ENCODE measurements at regions of chr1 and their contacts with region 1.

Region 1: DNA sequence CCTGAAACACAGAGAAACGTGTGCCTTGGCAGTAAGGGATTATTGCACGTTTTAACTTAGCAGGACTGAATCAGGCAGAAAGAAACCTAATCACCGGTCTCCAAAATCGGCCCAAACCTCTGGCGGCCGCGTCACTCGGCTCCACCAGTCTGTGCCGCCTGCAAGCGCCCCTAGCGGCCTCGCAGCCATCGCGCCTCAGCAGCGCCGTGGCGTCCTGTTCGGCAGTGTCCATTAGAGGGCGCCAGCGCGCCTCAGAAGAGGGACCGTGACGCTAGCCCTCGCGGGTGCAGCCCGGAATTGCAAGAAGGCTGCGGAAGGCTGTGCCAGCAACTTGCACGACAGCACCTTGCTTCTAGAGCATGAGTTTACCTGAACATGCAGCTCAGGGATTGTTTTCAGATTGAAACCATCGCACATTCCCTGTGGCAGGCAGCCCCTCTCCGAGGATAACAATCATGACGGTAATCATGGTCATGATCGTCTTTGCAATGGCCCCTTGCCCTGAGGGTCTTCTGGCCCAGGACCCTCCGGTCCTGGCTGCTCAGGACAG is 164.4 kb downstream of the TRIM33 start:
- DNase-seq: peak; percentile 98
- H3K4me3 Mint-ChIP-seq: peak overlapping the region; percentile 84
- H3K27ac Mint-ChIP-seq: peak overlapping the region; percentile 80
- H3K4me1 Mint-ChIP-seq: peaks cover 18% of the 10 kb centered on the region
- H3K27me3 Mint-ChIP-seq: no peaks in the 10 kb centered on the region

Region 2: DNA sequence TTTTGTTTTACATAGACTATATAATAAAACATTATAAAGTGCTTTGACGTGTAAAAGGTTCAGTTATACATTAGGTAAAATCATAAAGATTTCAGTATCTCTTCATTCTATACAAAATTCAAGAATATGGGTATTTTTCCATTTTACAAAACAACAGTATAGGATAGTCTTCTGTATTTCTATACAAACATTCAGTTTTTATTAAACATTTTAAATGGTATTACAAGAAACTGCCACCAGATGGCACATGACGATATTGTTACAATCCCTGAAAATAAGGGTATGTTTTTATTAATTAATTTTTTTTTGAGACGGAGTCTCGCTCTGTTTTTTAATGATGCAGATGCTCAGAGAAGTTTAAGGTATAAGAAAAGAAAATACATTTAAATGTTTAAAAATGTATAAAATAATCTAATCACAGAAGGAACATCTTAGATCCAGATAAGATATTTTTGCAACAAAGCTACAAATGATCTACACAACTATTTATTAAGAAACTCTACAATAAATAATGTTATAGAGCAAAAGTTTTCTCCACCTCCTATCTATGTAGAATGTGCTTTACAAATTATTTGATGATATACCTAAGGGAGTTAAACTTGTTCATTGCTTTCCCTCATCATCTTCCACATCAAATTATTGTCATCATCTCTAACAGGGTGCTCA is 510.8 kb before region 1 on chr1:
- CTCF ChIA-PET with region 1: no interaction called
- intact Hi-C with region 1: no loop called
- DNase-seq: peak; percentile 35
- H3K4me3 Mint-ChIP-seq: no peak overlapping the region
- H3K27ac Mint-ChIP-seq: no peak overlapping the region
- H3K4me1 Mint-ChIP-seq: peaks cover 3% of the 10 kb centered on the region
- H3K27me3 Mint-ChIP-seq: no peaks in the 10 kb centered on the region

Region 3: DNA sequence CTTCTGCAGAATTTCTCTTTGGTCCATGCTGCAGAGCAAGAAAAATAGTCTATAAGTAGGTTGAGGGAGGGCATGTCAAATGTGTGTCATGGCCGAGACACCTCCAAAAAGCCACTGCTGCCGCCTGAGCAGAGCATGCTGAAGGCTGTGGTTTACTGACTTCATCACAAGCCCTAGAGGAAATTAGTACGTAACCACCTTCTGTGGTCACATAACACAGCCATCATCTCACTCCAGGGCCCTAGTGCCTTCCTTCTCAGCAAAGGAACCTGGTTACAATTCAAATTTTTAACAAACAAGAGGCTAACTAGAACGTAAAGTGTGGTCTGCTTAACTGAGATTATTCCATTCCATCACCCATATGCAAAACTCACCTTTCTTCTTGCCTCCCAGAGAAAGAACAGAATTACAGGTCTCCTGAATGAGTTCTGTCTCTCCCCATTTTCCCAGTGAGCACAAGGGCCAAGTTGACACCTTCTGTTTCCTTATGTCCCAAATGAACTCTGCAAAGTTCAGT is 474.9 kb before region 1 on chr1 and contains the start of gene PTPN22:
- CTCF ChIA-PET with region 1: no interaction called
- intact Hi-C with region 1: loop called (anchors 10 kb)
- DNase-seq: peak; percentile 90
- H3K4me3 Mint-ChIP-seq: peak within 1 kb of the TSS; percentile 85
- H3K27ac Mint-ChIP-seq: peak within 1 kb of the TSS; percentile 98
- H3K4me1 Mint-ChIP-seq: peaks cover 64% of the 10 kb centered on the region
- H3K27me3 Mint-ChIP-seq: no peaks in the 10 kb centered on the region
- total RNA-seq, gene PTPN22: 43.9 to 50.9 TPM

Region 4: DNA sequence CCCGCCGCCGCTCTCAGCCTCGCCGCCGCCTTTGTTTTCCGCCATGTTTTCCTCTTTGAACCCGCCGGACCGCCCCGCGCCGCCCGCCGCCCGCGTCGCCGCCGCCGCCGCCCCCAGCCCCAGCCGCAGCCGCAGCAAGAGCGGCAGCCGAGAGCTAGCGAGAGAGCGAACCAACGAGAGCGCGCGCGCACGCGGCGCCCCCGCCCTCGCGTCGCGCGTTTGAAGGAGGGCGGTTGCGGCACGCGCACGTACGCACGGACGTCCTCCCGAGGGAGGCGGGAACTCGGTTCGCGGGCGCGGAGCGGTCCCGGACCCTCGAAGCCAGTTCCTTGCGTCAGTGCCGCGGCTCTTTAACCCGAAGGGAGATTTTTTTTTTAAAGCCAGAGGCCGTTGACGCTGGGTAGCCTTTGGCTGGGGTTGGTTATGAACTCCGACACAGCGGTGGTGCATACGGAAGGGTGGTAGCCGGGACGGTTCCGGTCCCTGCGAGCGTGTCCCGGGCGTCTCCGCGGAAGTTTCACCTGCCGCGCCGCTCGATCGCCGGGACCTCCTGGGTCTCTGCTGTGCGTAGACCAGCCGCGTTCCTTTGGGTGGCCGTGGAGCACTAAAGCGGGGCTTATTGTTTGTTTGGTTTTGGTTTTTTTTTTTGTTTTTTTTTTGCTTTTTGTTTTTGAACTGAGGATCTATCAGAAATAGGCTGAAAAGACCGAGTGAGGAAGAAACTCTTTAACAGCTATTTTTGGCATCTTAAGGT is 164.7 kb after region 1 on chr1 and contains the start of gene TRIM33:
- CTCF ChIA-PET with region 1: interaction called, 3 read pairs
- intact Hi-C with region 1: loop called (anchors 1 kb)
- DNase-seq: peak; percentile 92
- H3K4me3 Mint-ChIP-seq: peak within 1 kb of the TSS; percentile 90
- H3K27ac Mint-ChIP-seq: peak within 1 kb of the TSS; percentile 99
- H3K4me1 Mint-ChIP-seq: peaks cover 48% of the 10 kb centered on the region
- H3K27me3 Mint-ChIP-seq: no peaks in the 10 kb centered on the region
- total RNA-seq, gene TRIM33: 23.1 to 25.0 TPM

Region 5: DNA sequence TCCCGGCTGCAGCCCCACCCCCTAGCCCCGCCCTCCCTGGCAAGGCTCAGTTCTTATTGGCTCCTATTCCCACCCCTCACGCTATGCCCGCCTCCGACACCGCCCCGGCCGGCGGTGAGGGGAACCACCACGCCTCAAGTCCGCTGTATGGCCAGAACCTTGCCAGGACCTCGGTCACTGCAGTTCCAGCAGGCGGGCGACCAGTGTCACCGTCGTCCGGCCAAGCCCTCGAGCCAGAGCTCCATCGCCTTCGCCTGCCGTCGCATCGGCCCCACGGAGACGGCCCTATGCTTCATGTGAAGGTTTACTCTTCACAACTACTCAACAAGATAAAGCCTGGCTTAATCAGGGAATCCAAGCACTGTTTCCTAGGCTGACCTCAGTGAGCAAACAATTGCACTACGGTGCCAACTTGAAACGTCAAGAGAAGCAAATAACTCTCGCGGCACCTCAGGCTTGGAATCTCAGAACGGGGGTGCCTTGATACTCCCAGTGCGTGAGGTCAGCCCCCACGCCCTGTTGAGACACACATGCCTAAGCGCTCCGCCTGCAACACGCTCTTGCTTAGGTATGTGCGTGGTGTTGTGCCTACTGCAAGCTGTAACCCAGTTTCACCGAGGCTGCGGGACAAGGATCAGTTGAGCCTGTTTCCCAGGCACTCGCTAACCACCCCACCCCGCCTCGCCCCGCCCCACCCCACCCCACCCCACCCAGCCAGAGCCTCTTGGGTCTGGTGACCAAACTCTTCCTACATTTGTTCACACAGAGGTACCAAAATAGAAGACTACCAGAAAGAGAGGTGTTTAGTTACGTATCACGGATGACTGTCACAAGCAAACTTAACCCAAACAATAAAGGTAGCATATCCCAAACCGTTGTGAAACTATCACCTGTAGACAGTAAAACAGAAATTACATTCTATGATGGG is 323.8 kb after region 1 on chr1:
- CTCF ChIA-PET with region 1: interaction called, 31 read pairs
- intact Hi-C with region 1: loop called (anchors 1 kb)
- DNase-seq: peak; percentile 87
- H3K4me3 Mint-ChIP-seq: peak overlapping the region; percentile 87
- H3K27ac Mint-ChIP-seq: no peak overlapping the region
- H3K4me1 Mint-ChIP-seq: peaks cover 4% of the 10 kb centered on the region
- H3K27me3 Mint-ChIP-seq: peaks cover 1% of the 10 kb centered on the region

Region 6: GRCh38 chr1:115052454-115053083 is 706.0 kb after region 1 on chr1:
- CTCF ChIA-PET with region 1: interaction called, 10 read pairs
- intact Hi-C with region 1: loop called (anchors 1 kb)
- DNase-seq: peak; percentile 73
- H3K4me3 Mint-ChIP-seq: no peak overlapping the region
- H3K27ac Mint-ChIP-seq: no peak overlapping the region
- H3K4me1 Mint-ChIP-seq: no peaks in the 10 kb centered on the region
- H3K27me3 Mint-ChIP-seq: no peaks in the 10 kb centered on the region

Region 7: GRCh38 chr1:115112496-115113375 is 766.2 kb after region 1 on chr1:
- CTCF ChIA-PET with region 1: no interaction called
- intact Hi-C with region 1: loop called (anchors 2 kb)
- DNase-seq: peak; percentile 55
- H3K4me3 Mint-ChIP-seq: no peak overlapping the region
- H3K27ac Mint-ChIP-seq: no peak overlapping the region
- H3K4me1 Mint-ChIP-seq: peaks cover 8% of the 10 kb centered on the region
- H3K27me3 Mint-ChIP-seq: no peaks in the 10 kb centered on the region

Measured in activated naive CD4-positive, alpha-beta T cell treated with anti-CD3 and anti-CD28 coated beads for 36 hours (primary cell).